ENCODE measurements at regions of chr11 and their contacts with region 1.

Region 1: DNA sequence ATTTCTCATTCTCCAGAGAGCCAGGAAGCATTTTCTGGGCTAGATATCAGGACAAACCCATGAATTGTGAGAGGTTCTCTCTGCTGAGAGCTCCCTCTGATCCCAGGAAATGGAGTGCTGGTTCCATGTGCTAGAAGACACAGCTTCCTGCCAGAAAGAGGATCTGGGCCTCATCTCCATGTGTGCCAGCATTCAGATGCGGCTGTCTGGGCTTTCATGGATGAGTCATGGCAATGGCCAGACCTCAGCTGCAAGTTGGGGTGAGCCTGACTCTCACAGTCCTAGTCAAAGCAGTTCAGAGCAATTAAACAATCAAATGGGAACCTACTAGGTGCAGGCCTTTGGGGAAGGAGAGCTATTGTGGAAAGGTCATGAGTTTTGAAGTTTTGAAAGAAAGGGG is 82.3 kb upstream of the EED start:
- DNase-seq: no peak
- H3K4me3 ChIP-seq: no peak overlapping the region
- H3K27ac ChIP-seq: no peak overlapping the region
- H3K4me1 ChIP-seq: peaks cover 56% of the 10 kb centered on the region
- H3K27me3 ChIP-seq: no peaks in the 10 kb centered on the region
- CTCF ChIP-seq: no peak

Region 2: DNA sequence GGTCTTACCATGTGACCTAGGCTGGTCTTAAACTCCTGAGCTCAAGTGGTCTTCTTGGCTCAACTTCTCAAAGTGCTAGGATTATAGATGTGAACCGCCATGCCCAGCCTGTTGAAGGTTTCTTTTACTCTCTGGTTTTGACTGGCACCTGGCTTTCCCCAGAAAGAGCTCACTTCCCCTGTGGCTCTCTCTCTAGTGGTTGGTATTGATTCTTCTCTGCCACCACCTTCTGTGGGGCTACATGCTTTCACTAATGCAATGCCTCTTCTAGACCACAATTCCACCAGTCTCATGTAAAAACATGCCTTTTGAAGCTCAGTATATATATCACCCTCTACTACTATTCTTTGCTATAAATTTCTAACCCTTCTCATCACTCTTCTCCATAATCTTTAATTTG is 239.9 kb before region 1 on chr11:
- CTCF ChIA-PET with region 1: interaction called, 11 read pairs
- POLR2A ChIA-PET with region 1: no interaction called
- intact Hi-C with region 1: no loop called
- DNase-seq: no peak
- H3K4me3 ChIP-seq: no peak overlapping the region
- H3K27ac ChIP-seq: no peak overlapping the region
- H3K4me1 ChIP-seq: no peaks in the 10 kb centered on the region
- H3K27me3 ChIP-seq: no peaks in the 10 kb centered on the region
- CTCF ChIP-seq: no peak

Region 3: GRCh38 chr11:86174101-86175046 is 12.1 kb after region 1 on chr11:
- CTCF ChIA-PET with region 1: no interaction called
- POLR2A ChIA-PET with region 1: interaction called, 6 read pairs
- intact Hi-C with region 1: loop called (anchors 1 kb)
- DNase-seq: peak; percentile 80 to 98
- H3K4me3 ChIP-seq: no peak overlapping the region
- H3K27ac ChIP-seq: peak overlapping the region; percentile 79
- H3K4me1 ChIP-seq: peaks cover 62% of the 10 kb centered on the region
- H3K27me3 ChIP-seq: no peaks in the 10 kb centered on the region
- CTCF ChIP-seq: no peak

Measured in PC-9 (cell line).